Activated CD8-positive, alpha-beta T cell treated with anti-CD3 and anti-CD28 coated beads, Interleukin-2, amount 10 ng/mL, durations not matched to agents 7 days and 5 days (primary cell): ENCODE measurements at regions of chr10 and their contacts with region 1.

Region 1: GRCh38 chr10:7787857-7788638 is at the starts of genes ATP5F1C and KIN:
- DNase-seq: peak; percentile 98
- ATAC-seq: peak; percentile 95
- H3K4me3 Mint-ChIP-seq: no peak within 1 kb of the TSS
- H3K27ac Mint-ChIP-seq: no peak within 1 kb of the TSS
- H3K4me1 Mint-ChIP-seq: peaks cover 47% of the 10 kb centered on the region
- H3K27me3 Mint-ChIP-seq: no peaks in the 10 kb centered on the region
- total RNA-seq, gene ATP5F1C: 291 to 293 TPM
- total RNA-seq, gene KIN: 14.8 to 17.5 TPM

Region 2: DNA sequence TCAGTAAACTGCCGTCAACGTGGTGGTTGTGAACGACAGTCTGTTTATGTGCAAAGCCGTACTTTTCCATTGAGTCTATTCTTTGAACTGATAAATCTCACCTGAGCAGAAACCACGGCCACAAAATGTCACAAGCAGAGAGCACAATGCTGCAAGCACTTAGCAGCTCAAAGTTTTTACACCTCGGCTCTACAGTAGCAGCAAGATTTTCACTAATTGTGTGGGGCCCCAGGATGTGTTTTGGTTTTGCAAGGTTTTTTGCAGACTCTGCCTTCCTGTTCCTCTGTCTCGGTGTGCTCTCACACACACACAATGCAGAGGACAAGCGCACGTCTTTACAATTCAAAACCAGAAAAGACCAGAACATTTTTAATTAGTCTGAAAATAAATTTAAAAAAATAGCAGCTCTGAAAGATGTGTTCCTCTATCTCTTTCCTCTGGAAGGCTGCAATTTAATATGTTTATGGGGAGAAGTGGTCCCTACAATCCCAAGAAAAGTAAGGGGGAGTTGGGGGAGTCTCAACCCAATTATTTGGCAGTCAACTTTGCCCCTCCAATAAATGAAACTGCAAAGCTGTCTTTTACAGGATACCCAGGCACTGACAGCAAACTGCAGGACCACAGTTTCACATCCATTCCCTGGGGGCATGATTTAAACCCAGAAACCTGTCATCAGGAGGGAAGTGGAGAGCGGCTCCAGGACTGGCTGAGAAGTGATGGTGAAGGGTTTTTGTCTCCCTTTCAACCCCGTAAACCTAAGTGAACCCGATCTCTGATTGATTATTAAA is 303.4 kb before region 1 on chr10:
- CTCF ChIA-PET with region 1: no interaction called
- POLR2A ChIA-PET with region 1: interaction called, 10 read pairs
- DNase-seq: peak; percentile 91
- ATAC-seq: peak; percentile 92
- H3K4me3 Mint-ChIP-seq: peak overlapping the region; percentile 65
- H3K27ac Mint-ChIP-seq: peak overlapping the region; percentile 97
- H3K4me1 Mint-ChIP-seq: peaks cover 93% of the 10 kb centered on the region
- H3K27me3 Mint-ChIP-seq: no peaks in the 10 kb centered on the region

Region 3: GRCh38 chr10:7818295-7819122 is 30.5 kb after region 1 on chr10 and contains the start of gene TAF3:
- CTCF ChIA-PET with region 1: interaction called, 11 read pairs
- POLR2A ChIA-PET with region 1: interaction called, 36 read pairs
- DNase-seq: peak; percentile 95
- ATAC-seq: peak; percentile 86
- H3K4me3 Mint-ChIP-seq: peak within 1 kb of the TSS; percentile 90
- H3K27ac Mint-ChIP-seq: peak within 1 kb of the TSS; percentile 84
- H3K4me1 Mint-ChIP-seq: peaks cover 30% of the 10 kb centered on the region
- H3K27me3 Mint-ChIP-seq: peaks cover 11% of the 10 kb centered on the region
- total RNA-seq, gene TAF3: 13.7 to 14.6 TPM

Region 4: DNA sequence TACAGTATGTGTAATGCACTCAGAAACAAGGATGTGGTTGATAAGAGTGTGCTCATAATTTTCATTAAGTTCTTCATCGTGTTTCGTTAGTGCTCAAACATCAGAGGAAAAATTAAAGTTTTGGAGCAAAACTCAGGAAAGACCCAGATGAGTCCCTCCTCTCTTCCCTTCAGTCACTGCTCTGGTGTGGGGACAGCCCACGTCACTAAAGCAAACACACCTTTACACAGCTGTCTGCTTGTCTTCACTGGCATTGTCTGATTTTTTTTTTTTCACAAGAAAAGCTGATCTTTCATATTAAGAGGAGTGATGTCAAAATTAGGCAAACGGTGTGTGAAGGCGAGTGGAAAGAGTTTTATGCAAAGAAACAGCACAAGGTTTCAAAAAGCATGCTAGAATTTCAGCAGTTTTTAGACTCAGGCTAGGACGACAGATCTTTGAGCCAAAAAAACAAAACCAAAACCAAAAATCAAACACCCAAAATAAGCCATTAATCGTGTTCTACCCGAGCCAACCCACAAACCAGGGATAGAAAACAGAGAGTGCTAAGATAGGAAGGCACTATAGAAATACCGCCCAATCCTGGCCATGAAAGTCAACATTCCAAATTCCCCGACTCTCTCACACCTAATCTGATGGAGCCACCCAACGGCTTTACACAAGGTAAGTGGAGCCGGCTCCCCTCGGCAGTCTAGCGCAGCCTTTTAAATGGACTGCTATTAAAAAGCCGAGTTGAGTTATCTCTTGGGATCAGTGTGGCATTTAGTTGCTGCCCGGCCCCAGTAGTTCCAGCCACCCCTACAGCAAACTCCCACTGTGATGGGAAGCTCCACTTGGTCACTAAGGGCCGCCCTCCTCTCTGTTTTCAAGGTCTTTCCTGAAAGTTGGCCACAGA is 238.5 kb after region 1 on chr10:
- CTCF ChIA-PET with region 1: no interaction called
- POLR2A ChIA-PET with region 1: no interaction called
- DNase-seq: no peak
- ATAC-seq: peak; percentile 27
- H3K4me3 Mint-ChIP-seq: peak overlapping the region; percentile 74
- H3K27ac Mint-ChIP-seq: peak overlapping the region; percentile 61
- H3K4me1 Mint-ChIP-seq: peaks cover 8% of the 10 kb centered on the region
- H3K27me3 Mint-ChIP-seq: peaks cover 20% of the 10 kb centered on the region

Region 5: DNA sequence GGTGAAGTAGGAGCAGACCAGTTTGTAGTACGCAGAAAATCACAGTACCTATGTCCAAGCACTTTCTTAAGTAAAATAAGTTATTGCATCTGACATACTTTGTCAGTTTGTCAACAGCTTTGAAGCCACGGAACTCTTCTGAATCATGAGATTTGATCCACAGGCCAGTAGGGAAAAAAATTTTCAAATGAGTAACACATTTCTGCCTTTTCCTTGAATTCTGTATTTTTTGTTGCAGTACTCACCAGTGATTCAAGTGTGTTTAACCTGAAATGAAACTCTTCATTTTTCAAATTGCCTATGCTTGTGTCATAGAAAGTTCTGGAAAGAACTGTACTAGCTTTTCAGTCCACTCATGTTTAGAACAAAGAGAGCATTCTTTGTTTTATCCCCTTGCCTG is 604.2 kb after region 1 on chr10:
- CTCF ChIA-PET with region 1: no interaction called
- POLR2A ChIA-PET with region 1: no interaction called
- DNase-seq: no peak
- ATAC-seq: no peak
- H3K4me3 Mint-ChIP-seq: no peak overlapping the region
- H3K27ac Mint-ChIP-seq: no peak overlapping the region
- H3K4me1 Mint-ChIP-seq: peaks cover 7% of the 10 kb centered on the region
- H3K27me3 Mint-ChIP-seq: no peaks in the 10 kb centered on the region